Dorsolateral prefrontal cortex (tissue), 120 donors: ENCODE measurements at regions of chr3 and their contacts with region 1.

Region 1: DNA sequence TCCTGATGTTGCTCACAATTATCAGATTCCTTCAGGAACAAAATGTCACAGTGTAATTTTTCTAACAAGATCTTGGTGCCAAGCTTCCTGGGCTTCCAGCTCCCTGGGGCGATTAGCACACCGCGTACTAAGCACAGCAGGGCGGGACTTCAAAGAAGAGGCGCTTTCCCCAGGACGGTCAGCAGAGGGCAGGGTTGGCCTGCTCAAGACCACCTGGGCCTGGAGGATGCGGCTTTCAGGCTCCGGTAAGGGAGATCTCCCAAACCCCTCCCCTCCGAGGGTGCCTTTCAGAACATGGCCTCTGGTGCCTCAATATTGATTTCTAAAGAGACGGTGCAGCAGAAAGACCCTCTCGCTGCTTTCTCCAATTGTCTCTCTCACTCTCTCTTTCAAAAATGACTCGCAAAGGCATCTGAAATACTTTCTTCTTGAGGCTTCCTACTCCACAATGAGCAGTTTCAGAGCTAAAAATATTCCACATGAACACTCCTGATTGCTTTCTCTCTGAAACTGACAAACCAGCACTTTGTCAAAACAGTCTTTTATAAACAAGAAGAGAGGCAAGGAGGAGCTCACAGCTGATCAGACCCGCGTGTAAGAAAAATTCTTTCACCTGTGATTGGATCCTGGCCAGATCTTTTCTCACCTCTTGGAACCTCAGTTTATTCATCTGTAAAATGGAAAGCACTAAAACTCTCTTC is 154.0 kb downstream of the ADAMTS9 start:
- DNase-seq: peak; percentile 67 to 90 (median 84)
- H3K4me3 ChIP-seq: peak overlapping the region in 50 of 59 donors; percentile 5 to 62 (median 36)
- H3K27ac ChIP-seq: peak overlapping the region in 14 of 59 donors; percentile 7 to 69 (median 36)
- H3K27me3 ChIP-seq: no peaks in the 10 kb centered on the region
- CTCF ChIP-seq: peak; percentile 71 to 96 (median 90)

Region 2: GRCh38 chr3:64859625-64860547 is 326.1 kb after region 1 on chr3:
- intact Hi-C with region 1: no loop called
- DNase-seq: no peak
- H3K4me3 ChIP-seq: no peak overlapping the region
- H3K27ac ChIP-seq: peak overlapping the region in 1 of 59 donors; percentile 15
- H3K27me3 ChIP-seq: peaks cover 0 to 35% (median 0%) of the 10 kb centered on the region in 45 donors
- CTCF ChIP-seq: no peak

Region 3: GRCh38 chr3:65170390-65171042 is 636.7 kb after region 1 on chr3:
- intact Hi-C with region 1: loop called in 1 of 2 experiments (anchors 5 kb)
- DNase-seq: peak in 8 of 10 donors; percentile 4 to 56 (median 44)
- H3K4me3 ChIP-seq: peak overlapping the region in 5 of 59 donors; percentile 3 to 35 (median 10)
- H3K27ac ChIP-seq: peak overlapping the region in 12 of 59 donors; percentile 2 to 70 (median 27)
- H3K27me3 ChIP-seq: peaks cover 0 to 3% (median 0%) of the 10 kb centered on the region in 45 donors
- CTCF ChIP-seq: peak in 55 of 56 donors; percentile 14 to 64 (median 42)

Region 4: DNA sequence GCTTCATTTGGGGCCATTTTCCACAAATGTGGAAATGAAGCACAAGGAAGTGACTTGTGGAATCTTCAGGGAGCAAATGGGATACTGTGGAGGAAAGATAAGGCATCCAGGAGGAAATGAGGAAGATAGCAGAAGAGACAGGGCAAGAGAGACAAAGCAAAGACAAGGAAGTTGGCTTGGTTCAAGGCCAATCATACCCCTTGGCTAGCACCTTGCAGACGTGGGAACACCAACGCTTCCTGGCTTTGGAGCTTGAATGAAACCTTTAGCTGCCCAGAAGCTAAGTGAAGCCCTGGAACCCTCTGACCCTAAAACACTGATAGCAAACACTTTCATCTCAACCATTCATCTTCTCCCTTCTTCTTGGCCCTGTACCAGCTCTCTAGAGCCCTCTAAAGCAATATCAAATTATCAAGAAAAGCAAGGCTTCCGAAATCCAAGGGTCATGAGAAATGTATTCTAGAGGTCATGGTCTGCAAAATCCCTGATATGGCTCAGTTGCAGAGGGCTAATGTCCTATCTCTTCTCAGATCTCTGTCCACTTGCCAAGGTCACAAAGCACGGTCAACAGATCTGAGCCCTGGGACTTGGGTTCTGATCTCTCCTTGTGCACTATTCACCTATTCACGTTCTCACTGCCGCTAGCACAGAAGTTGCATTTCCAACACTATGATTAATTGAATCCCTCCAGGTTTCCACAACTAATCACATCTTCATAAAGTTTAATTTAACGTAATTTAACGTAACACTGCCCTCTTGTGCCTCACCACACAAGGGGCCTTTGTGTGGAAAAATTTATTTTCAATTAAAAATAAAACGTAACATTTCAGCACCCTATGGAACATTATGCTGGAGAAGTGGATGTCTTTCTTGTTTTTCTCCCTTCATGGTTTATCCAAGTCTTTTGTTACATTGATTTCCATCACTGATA is 711.6 kb after region 1 on chr3:
- intact Hi-C with region 1: loop called (anchors 10 kb)
- DNase-seq: no peak
- H3K4me3 ChIP-seq: no peak overlapping the region
- H3K27ac ChIP-seq: no peak overlapping the region
- H3K27me3 ChIP-seq: no peaks in the 10 kb centered on the region
- CTCF ChIP-seq: peak in 49 of 56 donors; percentile 19 to 59 (median 39)

Region 5: DNA sequence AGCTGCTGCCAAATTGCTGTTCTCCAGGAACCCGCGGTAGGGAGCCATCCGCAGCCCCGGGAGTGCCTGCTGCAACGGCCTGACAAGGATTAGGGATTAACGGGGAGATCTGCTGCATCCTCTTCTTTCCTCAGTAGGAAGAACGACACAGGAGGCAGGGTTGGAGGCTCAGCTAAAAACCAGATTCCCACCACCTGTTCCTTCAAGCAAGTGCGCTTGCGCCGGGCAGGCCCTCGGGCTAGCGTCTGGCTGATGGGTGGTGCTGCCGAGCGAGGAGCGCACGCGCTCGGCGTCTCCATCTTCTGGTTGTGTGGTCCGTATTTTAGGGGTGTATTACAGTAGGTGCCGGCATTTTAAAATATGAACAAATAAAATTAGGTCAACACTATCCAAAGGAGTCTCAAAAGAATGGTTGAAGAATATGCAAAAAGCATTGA is 1661.6 kb after region 1 on chr3:
- intact Hi-C with region 1: loop called in 1 of 2 experiments (anchors 10 kb)
- DNase-seq: peak; percentile 60 to 92 (median 78)
- H3K4me3 ChIP-seq: peak overlapping the region; percentile 29 to 71 (median 57)
- H3K27ac ChIP-seq: peak overlapping the region in 7 of 59 donors; percentile 9 to 79 (median 38)
- H3K27me3 ChIP-seq: no peaks in the 10 kb centered on the region
- CTCF ChIP-seq: peak in 53 of 56 donors; percentile 9 to 70 (median 49)